Head of caudate nucleus (tissue), 42 donors: ENCODE measurements at regions of chr11 and their contacts with region 1.

Region 1: GRCh38 chr11:22670830-22671229 is 4.4 kb downstream of the GAS2 start:
- DNase-seq: peak in 1 of 42 donors; percentile 38

Region 2: GRCh38 chr11:22780952-22781593 is 110.2 kb after region 1 on chr11:
- intact Hi-C with region 1: loop called (anchors 5 kb)
- DNase-seq: peak in 1 of 42 donors; percentile 7